Sigmoid colon (tissue), 7 donors: ENCODE measurements at regions of chr6 and their contacts with region 1.

Region 1: GRCh38 chr6:56292505-56293181 is 45.3 kb upstream of the COL21A1 start:
- DNase-seq: no peak
- H3K4me3 ChIP-seq: no peak overlapping the region
- H3K27ac ChIP-seq: no peak overlapping the region
- H3K4me1 ChIP-seq: peaks cover 0 to 19% (median 10%) of the 10 kb centered on the region in 4 donors
- H3K27me3 ChIP-seq: no peaks in the 10 kb centered on the region
- CTCF ChIP-seq: peak; percentile 62 to 76 (median 71)
- EP300 ChIP-seq: no peak
- POLR2A ChIP-seq: no peak

Region 2: GRCh38 chr6:55276745-55277530 is 1015.7 kb before region 1 on chr6:
- intact Hi-C with region 1: loop called (anchors 5 kb)
- DNase-seq: no peak
- H3K4me3 ChIP-seq: peak overlapping the region in 2 of 4 donors; percentile 9
- H3K27ac ChIP-seq: no peak overlapping the region
- H3K4me1 ChIP-seq: no peaks in the 10 kb centered on the region
- H3K27me3 ChIP-seq: no peaks in the 10 kb centered on the region
- CTCF ChIP-seq: peak in 2 of 4 experiments; percentile 30 to 47
- EP300 ChIP-seq: no peak
- POLR2A ChIP-seq: no peak

Region 3: GRCh38 chr6:55963301-55963700 is 329.3 kb before region 1 on chr6:
- intact Hi-C with region 1: no loop called
- DNase-seq: no peak
- H3K4me3 ChIP-seq: no peak overlapping the region
- H3K27ac ChIP-seq: no peak overlapping the region
- H3K4me1 ChIP-seq: no peaks in the 10 kb centered on the region
- H3K27me3 ChIP-seq: no peaks in the 10 kb centered on the region
- CTCF ChIP-seq: no peak
- EP300 ChIP-seq: no peak
- POLR2A ChIP-seq: no peak

Region 4: GRCh38 chr6:55980627-55981211 is 311.9 kb before region 1 on chr6:
- intact Hi-C with region 1: loop called (anchors 1 kb)
- DNase-seq: no peak
- H3K4me3 ChIP-seq: no peak overlapping the region
- H3K27ac ChIP-seq: no peak overlapping the region
- H3K4me1 ChIP-seq: no peaks in the 10 kb centered on the region
- H3K27me3 ChIP-seq: no peaks in the 10 kb centered on the region
- CTCF ChIP-seq: peak; percentile 54 to 79 (median 66)
- EP300 ChIP-seq: no peak
- POLR2A ChIP-seq: no peak

Region 5: GRCh38 chr6:56370561-56371211 is 78.0 kb after region 1 on chr6:
- intact Hi-C with region 1: no loop called
- DNase-seq: peak; percentile 91
- H3K4me3 ChIP-seq: peak overlapping the region in 1 of 4 donors; percentile 6
- H3K27ac ChIP-seq: peak overlapping the region; percentile 80 to 95 (median 90)
- H3K4me1 ChIP-seq: peaks cover 0 to 96% (median 79%) of the 10 kb centered on the region in 4 donors
- H3K27me3 ChIP-seq: no peaks in the 10 kb centered on the region
- CTCF ChIP-seq: no peak
- EP300 ChIP-seq: peak in 3 of 4 donors; percentile 40 to 87 (median 78)
- POLR2A ChIP-seq: no peak

Region 6: DNA sequence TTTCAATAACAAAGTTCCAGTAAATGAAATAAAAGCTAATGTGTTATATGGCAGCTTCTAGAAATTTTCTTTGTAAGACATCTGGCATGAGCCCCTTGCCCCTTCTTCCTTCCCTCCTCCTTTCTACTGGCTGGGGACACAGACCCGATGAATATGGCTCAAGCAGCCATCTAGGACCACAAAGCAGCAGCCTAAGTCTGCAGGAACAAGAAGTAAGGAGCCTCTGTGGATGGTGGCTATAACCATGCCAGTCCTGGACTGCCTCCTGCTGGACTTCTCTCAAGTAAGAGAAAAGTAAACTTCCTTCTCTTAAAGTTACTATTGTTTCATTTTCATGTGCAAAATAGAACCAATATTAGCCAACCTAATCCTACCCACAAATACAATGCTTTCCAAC is 464.9 kb after region 1 on chr6:
- intact Hi-C with region 1: no loop called
- DNase-seq: peak; percentile 64
- H3K4me3 ChIP-seq: no peak overlapping the region
- H3K27ac ChIP-seq: peak overlapping the region; percentile 24 to 68 (median 48)
- H3K4me1 ChIP-seq: peaks cover 0 to 82% (median 49%) of the 10 kb centered on the region in 4 donors
- H3K27me3 ChIP-seq: no peaks in the 10 kb centered on the region
- CTCF ChIP-seq: peak in 3 of 4 experiments; percentile 20 to 42 (median 34)
- EP300 ChIP-seq: no peak
- POLR2A ChIP-seq: no peak